Left cardiac atrium (tissue), 4 donors: ENCODE measurements at regions of chr9 and their contacts with region 1.

Region 1: GRCh38 chr9:75866273-75866871 is 24.1 kb upstream of the PCSK5 start:
- DNase-seq: no peak
- ATAC-seq: peak in 1 of 2 donors; percentile 41

Region 2: GRCh38 chr9:75200892-75201470 is 665.4 kb before region 1 on chr9:
- intact Hi-C with region 1: loop called in 1 of 2 experiments (anchors 2 kb)
- DNase-seq: no peak
- ATAC-seq: no peak

Region 3: GRCh38 chr9:75333624-75334023 is 532.7 kb before region 1 on chr9:
- intact Hi-C with region 1: loop called in 1 of 2 experiments (anchors 5 kb)
- DNase-seq: no peak
- ATAC-seq: no peak